MCF 10A (cell line): ENCODE measurements at regions of chr5 and their contacts with region 1.

Region 1: DNA sequence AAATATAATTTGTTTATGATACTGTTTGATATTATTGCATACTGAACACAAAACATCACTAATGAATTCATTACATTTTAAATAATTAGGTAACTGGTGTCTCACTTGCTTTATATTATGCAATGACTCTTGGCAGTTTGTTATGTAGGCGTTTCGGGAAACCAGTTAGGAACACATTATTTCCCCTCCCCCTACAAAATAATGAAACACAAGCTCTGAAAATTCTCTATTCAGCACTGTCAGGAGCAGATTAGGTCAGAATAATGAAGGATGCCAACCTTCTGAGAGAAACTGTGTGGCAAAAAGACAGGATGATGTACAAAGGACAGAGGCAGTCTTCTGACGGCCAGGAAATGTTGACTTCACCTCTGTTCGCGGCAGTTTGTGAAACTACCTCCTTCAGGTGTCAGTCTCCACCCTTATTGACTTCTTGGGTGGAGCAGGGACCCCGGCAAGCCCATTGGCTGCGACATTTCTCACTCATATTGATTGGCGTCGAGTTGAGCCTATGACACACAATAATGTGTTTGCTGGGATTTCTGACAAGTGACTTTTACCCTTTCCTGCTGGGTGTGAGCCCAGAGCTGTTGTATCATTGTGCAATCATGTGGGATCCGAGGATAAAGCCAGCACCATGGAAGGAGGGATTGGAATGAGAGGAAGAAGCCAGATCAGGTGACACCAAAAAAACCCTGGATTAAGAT is 33.9 kb downstream of the SH3PXD2B start:
- DNase-seq: peak; percentile 100
- H3K4me3 Mint-ChIP-seq: peak overlapping the region; percentile 73
- H3K27ac Mint-ChIP-seq: peak overlapping the region; percentile 80
- H3K4me1 Mint-ChIP-seq: peaks cover 50% of the 10 kb centered on the region
- H3K27me3 Mint-ChIP-seq: no peaks in the 10 kb centered on the region
- CTCF ChIP-seq: no peak

Region 2: GRCh38 chr5:172129256-172129910 is 291.0 kb before region 1 on chr5:
- CTCF ChIA-PET with region 1: no interaction called
- POLR2A ChIA-PET with region 1: no interaction called
- intact Hi-C with region 1: no loop called
- DNase-seq: no peak
- H3K4me3 Mint-ChIP-seq: no peak overlapping the region
- H3K27ac Mint-ChIP-seq: no peak overlapping the region
- H3K4me1 Mint-ChIP-seq: peaks cover 17% of the 10 kb centered on the region
- H3K27me3 Mint-ChIP-seq: no peaks in the 10 kb centered on the region
- CTCF ChIP-seq: no peak

Region 3: DNA sequence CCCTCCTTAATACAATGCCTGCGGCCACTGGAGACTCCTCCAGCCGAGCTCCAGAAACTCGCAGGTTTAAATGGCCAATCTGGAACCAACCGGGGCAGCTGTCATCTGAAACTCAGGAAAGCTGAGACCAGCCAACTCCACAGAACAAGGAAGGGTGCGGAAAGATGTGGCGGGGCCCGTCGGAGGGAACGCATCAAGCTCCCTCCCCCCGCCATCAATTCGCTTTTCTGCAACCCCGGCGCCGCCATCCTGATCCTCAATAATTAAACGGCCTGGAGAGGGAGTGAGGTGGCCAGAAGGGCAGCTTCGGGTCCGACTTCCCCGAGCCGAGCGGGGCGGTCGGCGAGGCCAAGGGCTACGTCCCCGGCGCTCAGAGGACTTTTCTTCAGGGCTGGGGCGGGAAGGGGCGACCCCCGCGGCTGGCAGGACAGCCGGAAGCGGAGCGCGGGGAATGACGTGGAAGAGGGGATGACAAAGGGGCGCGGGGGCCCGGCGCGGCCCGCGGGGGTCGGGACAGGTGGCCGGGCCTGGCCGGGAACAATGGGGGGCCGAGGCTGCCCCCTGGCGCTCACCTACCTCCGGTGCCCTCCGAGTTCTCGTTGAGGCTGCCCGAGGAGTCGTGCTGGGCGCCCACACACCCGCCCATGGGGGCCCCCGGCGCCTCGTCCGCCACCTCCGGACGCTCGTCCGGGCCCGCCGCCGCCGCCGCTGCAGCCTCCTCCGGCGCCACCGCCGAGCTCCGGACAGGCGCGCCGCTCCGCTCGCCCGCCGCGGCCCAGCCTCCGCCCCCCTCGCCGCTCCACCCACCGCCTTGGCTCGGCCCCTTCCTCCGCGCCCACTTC is 137.2 kb before region 1 on chr5 and contains the start of gene UBTD2:
- CTCF ChIA-PET with region 1: interaction called, 3 read pairs
- POLR2A ChIA-PET with region 1: interaction called, 42 read pairs
- intact Hi-C with region 1: no loop called
- DNase-seq: peak; percentile 88
- H3K4me3 Mint-ChIP-seq: peak within 1 kb of the TSS; percentile 95
- H3K27ac Mint-ChIP-seq: peak within 1 kb of the TSS; percentile 97
- H3K4me1 Mint-ChIP-seq: peaks cover 29% of the 10 kb centered on the region
- H3K27me3 Mint-ChIP-seq: no peaks in the 10 kb centered on the region
- CTCF ChIP-seq: peak; percentile 76
- total RNA-seq, gene UBTD2: 23.3 and 24.1 TPM in 2 replicates

Region 4: GRCh38 chr5:172361566-172362238 is 58.7 kb before region 1 on chr5:
- CTCF ChIA-PET with region 1: no interaction called
- POLR2A ChIA-PET with region 1: interaction called, 29 read pairs
- intact Hi-C with region 1: no loop called
- DNase-seq: peak; percentile 100
- H3K4me3 Mint-ChIP-seq: peak overlapping the region; percentile 58
- H3K27ac Mint-ChIP-seq: peak overlapping the region; percentile 99
- H3K4me1 Mint-ChIP-seq: peaks cover 46% of the 10 kb centered on the region
- H3K27me3 Mint-ChIP-seq: no peaks in the 10 kb centered on the region
- CTCF ChIP-seq: no peak

Region 5: DNA sequence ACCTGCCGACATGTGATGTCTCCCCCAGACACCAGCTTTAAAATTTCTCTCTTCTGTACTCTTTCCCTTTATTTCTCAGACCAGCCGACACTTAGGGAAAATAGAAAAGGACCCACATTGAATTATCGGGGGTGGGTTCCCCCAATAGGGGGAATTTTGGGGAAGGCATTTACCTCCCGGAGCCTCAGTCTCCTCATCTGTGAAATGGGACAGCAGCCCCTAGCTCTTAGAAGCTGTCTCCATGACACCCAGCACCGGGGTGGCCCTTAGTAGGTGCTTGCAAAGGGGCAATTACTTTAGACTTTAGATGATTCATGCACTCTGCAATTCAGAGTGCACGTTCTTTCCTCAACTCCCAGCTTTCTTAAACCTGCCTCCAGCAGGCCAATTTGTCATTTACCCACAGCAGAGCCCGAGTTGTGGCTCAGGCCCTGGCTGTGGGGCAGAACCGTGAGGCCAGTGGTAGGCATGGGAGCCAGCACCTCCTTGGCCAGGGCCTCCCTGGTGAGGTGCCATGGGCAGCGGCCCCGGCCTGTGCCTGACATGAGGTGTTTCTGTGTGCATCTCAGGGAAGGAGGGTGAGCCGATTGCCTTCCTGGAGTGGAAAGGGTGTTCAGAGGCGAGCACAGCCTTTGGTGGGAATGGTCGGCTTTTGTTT is 17.7 kb before region 1 on chr5:
- CTCF ChIA-PET with region 1: interaction called, 4 read pairs
- POLR2A ChIA-PET with region 1: interaction called, 110 read pairs
- intact Hi-C with region 1: no loop called
- DNase-seq: no peak
- H3K4me3 Mint-ChIP-seq: no peak overlapping the region
- H3K27ac Mint-ChIP-seq: no peak overlapping the region
- H3K4me1 Mint-ChIP-seq: peaks cover 26% of the 10 kb centered on the region
- H3K27me3 Mint-ChIP-seq: no peaks in the 10 kb centered on the region
- CTCF ChIP-seq: no peak

Region 6: DNA sequence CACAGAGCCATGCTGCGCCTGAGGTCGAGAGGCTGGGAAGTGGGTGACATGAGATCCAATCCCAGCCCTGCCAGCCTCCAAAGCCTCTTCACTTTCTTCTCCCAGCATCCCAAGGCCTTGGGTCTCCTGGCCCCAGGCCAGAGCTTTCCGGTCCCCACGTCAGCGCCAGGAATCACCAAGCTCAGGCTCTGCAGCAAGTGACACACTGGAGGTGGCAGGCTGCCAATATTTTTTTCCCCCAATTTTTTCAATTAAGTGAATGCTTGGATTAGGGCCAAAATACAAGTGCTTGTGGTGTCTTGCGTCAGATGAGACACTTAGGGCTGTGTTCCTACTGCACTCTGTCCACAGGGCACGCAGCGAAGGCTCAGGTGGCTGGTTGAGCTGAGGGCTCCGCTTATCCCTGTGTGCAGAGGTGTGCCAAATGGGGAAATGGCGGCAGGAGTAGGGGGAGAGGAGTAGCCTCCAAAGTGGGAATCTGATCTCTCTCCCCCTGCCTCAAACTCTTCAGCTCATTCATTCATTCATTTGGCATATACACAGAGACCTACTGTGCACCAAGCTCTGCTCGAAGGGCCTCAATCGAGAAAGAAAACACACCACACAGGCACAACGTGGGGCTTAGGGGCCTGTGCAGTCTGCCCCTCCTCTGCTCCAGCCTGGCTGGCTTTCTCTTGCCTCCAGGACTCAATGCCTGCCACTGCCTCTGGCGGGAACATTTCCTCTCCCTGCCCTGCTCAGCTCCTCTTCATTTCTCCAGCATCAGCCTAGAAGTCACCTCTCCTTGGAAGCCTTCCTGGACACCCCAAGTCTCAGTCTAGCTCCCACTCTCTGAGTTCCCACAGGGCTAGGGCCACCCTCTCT is 17.3 kb after region 1 on chr5:
- CTCF ChIA-PET with region 1: interaction called, 5 read pairs
- POLR2A ChIA-PET with region 1: interaction called, 59 read pairs
- intact Hi-C with region 1: no loop called
- DNase-seq: peak; percentile 98
- H3K4me3 Mint-ChIP-seq: peak overlapping the region; percentile 39
- H3K27ac Mint-ChIP-seq: no peak overlapping the region
- H3K4me1 Mint-ChIP-seq: peaks cover 18% of the 10 kb centered on the region
- H3K27me3 Mint-ChIP-seq: no peaks in the 10 kb centered on the region
- CTCF ChIP-seq: no peak

Region 7: GRCh38 chr5:172443441-172444109 is 23.2 kb after region 1 on chr5:
- CTCF ChIA-PET with region 1: interaction called, 4 read pairs
- POLR2A ChIA-PET with region 1: interaction called, 305 read pairs
- intact Hi-C with region 1: loop called (anchors 1 kb)
- DNase-seq: peak; percentile 100
- H3K4me3 Mint-ChIP-seq: peak overlapping the region; percentile 28
- H3K27ac Mint-ChIP-seq: peak overlapping the region; percentile 46
- H3K4me1 Mint-ChIP-seq: peaks cover 26% of the 10 kb centered on the region
- H3K27me3 Mint-ChIP-seq: no peaks in the 10 kb centered on the region
- CTCF ChIP-seq: no peak